ENCODE measurements at regions of chr3 and their contacts with region 1.

Region 1: GRCh38 chr3:177777699-177778098 is 580.4 kb upstream of the TBL1XR1 start:
- DNase-seq: peak in 4 of 5 donors; percentile 25 to 52 (median 36)
- ATAC-seq: peak in 2 of 4 donors; percentile 26 to 47
- H3K4me3 ChIP-seq: no peak overlapping the region
- H3K27ac ChIP-seq: no peak overlapping the region
- H3K4me1 ChIP-seq: peaks cover 0 to 67% (median 29%) of the 10 kb centered on the region in 12 donors
- H3K27me3 ChIP-seq: no peaks in the 10 kb centered on the region
- CTCF ChIP-seq: peak; percentile 37 to 65 (median 54)
- POLR2A ChIP-seq: no peak

Region 2: DNA sequence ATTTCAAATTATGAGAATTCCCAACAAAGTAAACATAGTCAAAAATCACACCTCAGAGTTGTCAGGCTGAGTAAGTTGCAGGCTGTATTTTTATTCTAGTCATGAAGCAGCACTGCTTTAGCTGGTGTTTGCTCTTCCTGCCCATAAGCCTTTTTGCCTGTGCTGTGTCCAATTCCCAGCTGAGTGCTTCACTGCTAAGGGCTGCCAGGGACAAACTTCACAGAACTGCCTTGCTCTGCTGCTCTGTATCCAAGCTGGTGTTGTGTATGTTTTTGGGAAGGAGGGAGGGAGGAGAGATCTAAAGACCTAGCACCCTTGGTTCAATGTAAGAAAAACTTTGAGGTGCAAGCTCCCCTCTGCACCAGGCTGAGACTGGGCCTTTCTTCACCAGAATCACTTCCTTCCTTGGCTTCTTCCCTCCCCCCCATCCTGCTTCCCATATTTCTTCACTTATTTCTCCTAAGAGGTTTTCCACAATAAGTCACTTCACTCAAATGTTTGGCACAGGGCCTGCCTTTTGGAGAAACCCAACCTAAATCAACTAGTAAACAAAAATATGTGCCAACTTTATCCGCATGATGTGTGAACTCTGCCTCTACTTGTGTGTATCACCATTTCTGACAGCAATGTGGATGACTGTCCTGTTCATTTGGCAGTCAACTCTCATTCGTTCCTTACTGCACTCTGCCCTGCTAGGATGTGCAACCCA is 736.5 kb before region 1 on chr3:
- intact Hi-C with region 1: loop called in 2 of 10 experiments (anchors 10 kb)
- DNase-seq: peak in 3 of 5 donors; percentile 37 to 46 (median 38)
- ATAC-seq: peak; percentile 84 to 92 (median 90)
- H3K4me3 ChIP-seq: no peak overlapping the region
- H3K27ac ChIP-seq: peak overlapping the region in 11 of 12 donors; percentile 26 to 73 (median 54)
- H3K4me1 ChIP-seq: peaks cover 0 to 42% (median 29%) of the 10 kb centered on the region in 12 donors
- H3K27me3 ChIP-seq: no peaks in the 10 kb centered on the region
- CTCF ChIP-seq: no peak
- POLR2A ChIP-seq: no peak

Region 3: GRCh38 chr3:177050501-177051237 is 727.0 kb before region 1 on chr3:
- intact Hi-C with region 1: loop called in 4 of 10 experiments (anchors 10 kb)
- DNase-seq: no peak
- ATAC-seq: peak; percentile 53 to 74 (median 60)
- H3K4me3 ChIP-seq: no peak overlapping the region
- H3K27ac ChIP-seq: no peak overlapping the region
- H3K4me1 ChIP-seq: peaks cover 0 to 22% (median 14%) of the 10 kb centered on the region in 12 donors
- H3K27me3 ChIP-seq: no peaks in the 10 kb centered on the region
- CTCF ChIP-seq: peak; percentile 35 to 73 (median 63)
- POLR2A ChIP-seq: no peak

Region 4: GRCh38 chr3:177084616-177085015 is 693.1 kb before region 1 on chr3:
- intact Hi-C with region 1: no loop called
- DNase-seq: no peak
- ATAC-seq: no peak
- H3K4me3 ChIP-seq: no peak overlapping the region
- H3K27ac ChIP-seq: no peak overlapping the region
- H3K4me1 ChIP-seq: peaks cover 0 to 56% (median 43%) of the 10 kb centered on the region in 12 donors
- H3K27me3 ChIP-seq: no peaks in the 10 kb centered on the region
- CTCF ChIP-seq: no peak
- POLR2A ChIP-seq: no peak

Region 5: DNA sequence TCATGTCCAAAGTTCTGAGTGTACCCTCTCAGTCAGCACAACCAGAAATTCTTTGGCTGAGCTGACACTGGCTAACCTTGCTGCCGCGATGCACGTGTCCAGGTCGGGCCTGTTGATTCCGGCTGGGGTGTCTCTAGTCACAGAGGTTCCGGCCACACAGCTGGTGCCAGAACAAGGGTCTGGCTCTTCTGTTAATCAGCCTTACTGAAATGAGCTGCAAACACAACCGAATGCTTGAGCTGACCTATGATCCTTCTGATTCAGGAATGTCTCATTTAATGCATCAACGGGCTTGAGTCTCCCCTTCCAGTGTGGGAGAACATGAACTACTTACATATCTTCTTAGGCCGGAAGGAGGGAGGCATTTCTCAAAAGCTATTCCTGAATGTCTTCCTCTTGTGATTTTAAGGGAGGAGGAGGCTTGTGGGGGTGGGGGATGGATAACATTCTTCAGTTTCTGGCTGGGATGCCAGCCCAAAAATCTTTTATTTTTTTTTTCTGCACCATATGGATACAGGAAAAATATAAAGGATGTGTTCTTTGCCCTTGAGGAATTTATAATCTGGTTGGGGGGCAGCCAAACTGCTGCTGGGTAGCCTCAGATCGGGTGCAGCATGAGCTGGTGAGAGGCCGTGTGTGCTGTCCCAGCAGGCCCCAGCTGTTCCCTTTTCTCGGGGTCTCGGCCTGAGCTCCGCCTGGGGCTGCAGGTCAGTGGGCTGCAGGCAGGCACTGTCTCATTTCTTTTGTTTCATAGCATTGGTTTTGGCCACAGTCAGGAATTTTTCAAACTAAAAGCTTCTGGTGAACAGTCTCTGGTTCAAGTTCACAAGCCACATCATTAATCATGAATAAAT is 261.3 kb before region 1 on chr3:
- intact Hi-C with region 1: loop called in 1 of 10 experiments (anchors 10 kb)
- DNase-seq: peak in 4 of 5 donors; percentile 48 to 75 (median 64)
- ATAC-seq: peak; percentile 81 to 95 (median 88)
- H3K4me3 ChIP-seq: no peak overlapping the region
- H3K27ac ChIP-seq: peak overlapping the region; percentile 9 to 78 (median 68)
- H3K4me1 ChIP-seq: peaks cover 4 to 47% (median 35%) of the 10 kb centered on the region in 12 donors
- H3K27me3 ChIP-seq: no peaks in the 10 kb centered on the region
- CTCF ChIP-seq: no peak
- POLR2A ChIP-seq: no peak

Region 6: GRCh38 chr3:177680442-177680821 is 97.3 kb before region 1 on chr3:
- intact Hi-C with region 1: no loop called
- DNase-seq: no peak
- ATAC-seq: no peak
- H3K4me3 ChIP-seq: no peak overlapping the region
- H3K27ac ChIP-seq: peak overlapping the region in 1 of 12 donors; percentile 74
- H3K4me1 ChIP-seq: peaks cover 0 to 34% (median 6%) of the 10 kb centered on the region in 12 donors
- H3K27me3 ChIP-seq: no peaks in the 10 kb centered on the region
- CTCF ChIP-seq: no peak
- POLR2A ChIP-seq: no peak

Region 7: GRCh38 chr3:177724020-177724638 is 53.6 kb before region 1 on chr3:
- intact Hi-C with region 1: loop called in 3 of 10 experiments (anchors 5 kb)
- DNase-seq: peak; percentile 66 to 91 (median 72)
- ATAC-seq: peak; percentile 91 to 98 (median 96)
- H3K4me3 ChIP-seq: no peak overlapping the region
- H3K27ac ChIP-seq: peak overlapping the region; percentile 28 to 80 (median 72)
- H3K4me1 ChIP-seq: peaks cover 0 to 54% (median 30%) of the 10 kb centered on the region in 12 donors
- H3K27me3 ChIP-seq: no peaks in the 10 kb centered on the region
- CTCF ChIP-seq: no peak
- POLR2A ChIP-seq: no peak

Region 8: DNA sequence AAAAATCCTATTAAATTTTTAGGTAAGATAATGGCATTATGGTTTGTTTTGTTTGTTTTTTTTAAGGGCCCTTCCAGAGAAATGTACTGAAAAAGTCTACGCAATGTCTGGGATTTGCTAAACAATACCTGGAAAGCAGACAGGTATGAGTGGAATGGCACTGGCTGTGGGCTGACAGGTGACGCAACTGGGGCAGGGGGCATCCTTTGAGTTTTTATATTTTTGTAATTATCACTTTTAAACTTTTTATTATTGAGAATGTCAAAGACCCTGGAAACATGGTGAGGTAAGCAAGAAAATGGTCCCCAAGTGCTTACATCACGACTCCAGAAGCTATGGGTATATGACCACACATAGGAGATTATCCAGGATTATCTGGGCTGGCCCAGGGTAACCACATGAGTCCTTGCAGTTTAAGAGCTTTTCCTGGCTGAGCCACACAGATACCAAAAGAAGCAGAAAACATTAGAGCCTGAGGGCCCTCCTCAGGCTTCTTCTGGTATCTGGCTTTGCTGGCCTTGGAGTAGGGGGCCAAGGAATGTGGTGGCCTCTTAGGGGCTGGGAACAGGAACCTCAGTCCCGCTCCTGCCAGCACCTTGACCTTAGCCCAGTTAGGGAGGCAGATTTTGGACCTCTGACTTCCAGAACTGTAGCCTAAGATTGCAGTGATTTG is 1017.5 kb after region 1 on chr3:
- intact Hi-C with region 1: no loop called
- DNase-seq: no peak
- ATAC-seq: no peak
- H3K4me3 ChIP-seq: no peak overlapping the region
- H3K27ac ChIP-seq: no peak overlapping the region
- H3K4me1 ChIP-seq: no peaks in the 10 kb centered on the region
- H3K27me3 ChIP-seq: no peaks in the 10 kb centered on the region
- CTCF ChIP-seq: no peak
- POLR2A ChIP-seq: no peak

Measured in heart left ventricle (tissue), 16 donors.